Motor neuron (in vitro differentiated cells): ENCODE measurements at regions of chr10 and their contacts with region 1.

Region 1: GRCh38 chr10:91251430-91252056 is 31.1 kb downstream of the PCGF5 start:
- ATAC-seq: peak in 5 of 8 experiments; percentile 41 to 73 (median 61)
- H3K4me3 ChIP-seq: no peak overlapping the region
- H3K27ac ChIP-seq: no peak overlapping the region
- H3K4me1 ChIP-seq: no peaks in the 10 kb centered on the region

Region 2: DNA sequence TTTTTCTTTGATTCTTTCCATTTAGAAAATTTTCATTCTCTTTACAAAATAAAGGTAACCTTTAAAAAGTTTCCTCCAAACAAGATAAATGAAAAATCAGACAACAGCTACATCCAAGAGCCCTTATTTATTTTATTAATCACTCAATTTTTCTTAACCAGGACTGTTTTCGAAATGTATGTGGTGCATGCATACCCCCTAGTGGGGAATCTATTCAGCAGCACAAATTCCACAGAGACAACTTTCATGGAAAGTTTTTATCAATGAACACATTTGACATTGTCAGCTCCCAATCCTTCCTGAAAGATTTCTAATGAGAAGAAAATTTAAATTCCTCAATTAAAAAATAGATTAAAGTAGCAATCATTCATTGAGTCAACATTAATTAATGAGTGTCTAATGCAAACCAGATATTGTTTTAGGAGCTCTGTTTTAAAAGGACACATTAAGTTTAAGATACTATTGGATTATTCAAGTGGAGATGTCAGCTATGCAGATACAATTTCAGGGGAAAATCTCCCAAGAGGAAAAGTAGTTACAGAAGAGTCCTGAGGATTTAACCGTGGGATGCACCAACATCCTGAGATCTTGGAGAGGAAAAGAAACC is 388.5 kb before region 1 on chr10:
- in situ Hi-C with region 1: no loop called
- ATAC-seq: peak in 1 of 8 experiments; percentile 20
- H3K4me3 ChIP-seq: no peak overlapping the region
- H3K27ac ChIP-seq: no peak overlapping the region
- H3K4me1 ChIP-seq: no peaks in the 10 kb centered on the region

Region 3: DNA sequence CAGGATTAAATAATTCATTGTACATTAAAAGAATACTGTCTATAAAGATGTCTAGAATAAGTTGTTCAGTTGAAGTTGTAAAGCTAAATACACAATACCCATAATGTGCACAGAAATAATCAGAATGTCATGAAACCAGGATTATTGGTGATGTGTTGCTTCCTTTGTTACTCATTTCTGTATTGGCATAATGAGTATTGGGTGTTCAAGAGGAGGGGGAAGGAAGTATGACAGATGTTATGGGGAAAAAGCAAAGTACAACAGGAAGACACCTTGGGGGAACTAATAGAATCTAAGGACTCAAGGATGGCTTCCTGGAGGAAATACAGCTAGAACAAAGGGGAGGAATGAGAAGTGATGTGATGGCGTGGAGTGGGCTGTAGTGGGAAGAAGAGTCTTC is 345.6 kb before region 1 on chr10:
- in situ Hi-C with region 1: loop called (anchors 5 to 25 kb)
- ATAC-seq: no peak
- H3K4me3 ChIP-seq: no peak overlapping the region
- H3K27ac ChIP-seq: no peak overlapping the region
- H3K4me1 ChIP-seq: no peaks in the 10 kb centered on the region

Region 4: GRCh38 chr10:90912174-90912573 is 339.4 kb before region 1 on chr10:
- in situ Hi-C with region 1: loop called (anchors 5 to 25 kb)
- ATAC-seq: peak in 3 of 8 experiments; percentile 25 to 55 (median 54)
- H3K4me3 ChIP-seq: no peak overlapping the region
- H3K27ac ChIP-seq: no peak overlapping the region
- H3K4me1 ChIP-seq: peaks cover 0 to 2% of the 10 kb centered on the region in 2 donors

Region 5: GRCh38 chr10:90920986-90921666 is 330.4 kb before region 1 on chr10 and contains the start of gene ANKRD1:
- in situ Hi-C with region 1: loop called in 7 of 9 experiments (anchors 25 kb)
- ATAC-seq: peak; percentile 33 to 100 (median 72)
- H3K4me3 ChIP-seq: no peak within 1 kb of the TSS
- H3K27ac ChIP-seq: no peak within 1 kb of the TSS
- H3K4me1 ChIP-seq: no peaks in the 10 kb centered on the region
- total RNA-seq, gene ANKRD1: 0.11 to 27.7 (median 0.24) TPM in 5 of 8 experiments, not detected in the others

Region 6: GRCh38 chr10:91635401-91636400 is 384.2 kb after region 1 on chr10:
- in situ Hi-C with region 1: no loop called
- ATAC-seq: peak in 4 of 8 experiments; percentile 10 to 24 (median 13)
- H3K4me3 ChIP-seq: no peak overlapping the region
- H3K27ac ChIP-seq: no peak overlapping the region
- H3K4me1 ChIP-seq: peaks cover 4 to 9% of the 10 kb centered on the region in 2 donors